Endothelial cell of umbilical vein (primary cell): ENCODE measurements at regions of chr17 and their contacts with region 1.

Region 1: GRCh38 chr17:74361230-74362068 is at the start of gene BTBD17:
- DNase-seq: peak; percentile 13
- H3K4me3 ChIP-seq: no peak within 1 kb of the TSS
- H3K27ac ChIP-seq: no peak within 1 kb of the TSS
- H3K4me1 ChIP-seq: no peaks in the 10 kb centered on the region
- H3K27me3 ChIP-seq: peaks cover 7 to 12% of the 10 kb centered on the region in 2 experiments
- CTCF ChIP-seq: peak; percentile 67 to 76
- POLR2A ChIP-seq: no peak
- total RNA-seq, gene BTBD17: not detected in 2 replicates

Region 2: DNA sequence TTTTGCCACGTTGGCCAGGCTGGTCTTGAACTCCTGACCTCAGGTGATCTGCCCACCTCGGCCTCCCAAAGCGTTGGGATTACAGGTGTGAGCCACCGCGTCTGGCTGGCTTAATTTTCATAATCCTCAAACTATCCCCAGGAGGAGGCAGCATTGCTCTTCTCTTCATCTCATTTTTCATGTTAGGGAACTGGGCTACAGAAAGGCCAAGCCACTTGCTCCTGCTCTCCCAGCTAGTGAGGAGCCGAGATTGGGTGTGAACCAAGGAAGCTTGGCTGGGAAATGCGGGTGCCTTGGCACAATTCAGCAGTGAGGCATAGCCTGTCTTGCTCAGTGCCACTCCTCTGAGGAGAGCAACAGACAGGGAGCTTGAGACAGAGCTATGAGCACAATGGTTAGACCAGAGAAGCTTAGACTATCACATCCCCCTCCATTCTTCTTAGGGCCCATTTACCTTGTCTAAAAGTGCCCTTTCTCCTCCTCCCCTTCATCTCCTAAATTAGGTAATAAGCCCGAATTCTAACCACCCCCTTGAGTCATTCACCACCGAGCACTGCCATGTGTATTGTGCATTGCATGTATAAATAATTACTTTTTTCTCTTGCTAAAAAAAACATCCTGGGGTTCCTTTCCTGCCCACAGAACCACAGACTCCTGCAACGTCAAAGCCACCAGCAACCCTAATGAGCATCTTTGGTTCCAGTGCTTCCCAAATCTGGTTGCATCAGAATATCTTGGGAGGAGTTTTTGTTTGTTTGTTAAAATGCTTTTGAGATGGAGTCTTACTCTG is 55.4 kb before region 1 on chr17:
- CTCF ChIA-PET with region 1: interaction called, 29 read pairs
- POLR2A ChIA-PET with region 1: no interaction called
- dilution Hi-C with region 1: no loop called
- intact Hi-C with region 1: loop called (anchors 1 kb)
- DNase-seq: no peak
- H3K4me3 ChIP-seq: no peak overlapping the region
- H3K27ac ChIP-seq: no peak overlapping the region
- H3K4me1 ChIP-seq: no peaks in the 10 kb centered on the region
- H3K27me3 ChIP-seq: no peaks in the 10 kb centered on the region
- CTCF ChIP-seq: no peak
- POLR2A ChIP-seq: no peak